CD4-positive, alpha-beta T cell (primary cell): ENCODE measurements at regions of chr5 and their contacts with region 1.

Region 1: GRCh38 chr5:79966448-79966847 is 24.6 kb downstream of the MTX3 start:
- DNase-seq: no peak
- ATAC-seq: no peak
- H3K4me3 ChIP-seq: no peak overlapping the region
- H3K4me3 Mint-ChIP-seq: no peak overlapping the region
- H3K27ac ChIP-seq: no peak overlapping the region
- H3K27ac Mint-ChIP-seq: no peak overlapping the region
- H3K4me1 ChIP-seq: no peaks in the 10 kb centered on the region
- H3K4me1 Mint-ChIP-seq: no peaks in the 10 kb centered on the region
- H3K27me3 ChIP-seq: peaks cover 4 to 6% of the 10 kb centered on the region in 2 experiments
- H3K27me3 Mint-ChIP-seq: peaks cover 14% of the 10 kb centered on the region
- CTCF ChIP-seq: no peak

Region 2: DNA sequence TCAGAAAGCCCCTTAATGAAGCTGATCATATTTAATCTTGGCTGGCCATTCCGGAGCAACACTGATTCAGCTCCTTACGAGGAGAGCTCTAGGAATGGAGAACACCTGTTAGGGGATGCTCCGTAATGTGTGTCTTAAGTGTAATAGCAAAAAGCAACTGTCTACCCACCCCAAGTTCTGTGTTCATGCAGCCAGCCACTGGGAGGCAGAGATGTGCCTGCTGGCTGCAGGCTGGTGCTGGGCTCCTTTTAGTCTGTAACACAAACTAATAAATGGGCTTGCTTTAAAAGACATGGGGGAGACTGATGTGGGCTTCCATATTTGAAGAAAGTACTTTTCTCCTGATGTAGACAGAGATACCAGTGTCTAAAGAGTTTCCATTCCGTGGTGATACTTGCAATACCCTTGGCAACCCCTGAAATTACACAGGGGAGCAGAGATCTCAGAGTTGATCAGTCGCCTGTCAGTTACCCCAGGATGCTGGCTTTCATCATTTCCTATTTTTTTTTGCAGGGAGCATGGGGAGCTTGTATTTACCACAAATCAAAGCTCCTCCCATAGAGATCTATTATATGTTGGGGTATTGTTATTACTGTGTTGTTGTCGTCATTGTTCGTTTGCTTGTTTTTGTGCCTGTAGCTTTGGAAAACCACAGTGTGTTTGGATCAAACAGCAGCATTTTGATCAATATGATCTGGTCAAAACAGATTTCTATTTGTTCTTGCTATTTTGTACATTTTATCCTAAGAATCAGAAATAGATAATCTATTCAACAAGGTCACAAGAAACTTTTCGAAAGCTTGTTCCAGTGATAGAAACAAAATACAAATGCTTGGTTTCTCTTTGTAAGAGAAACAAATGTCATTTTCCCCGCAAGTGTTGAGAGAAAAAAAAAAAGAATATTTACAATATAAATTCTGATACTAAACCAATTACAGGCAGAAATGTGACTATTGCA is 41.2 kb before region 1 on chr5:
- CTCF ChIA-PET with region 1: no interaction called
- POLR2A ChIA-PET with region 1: no interaction called
- intact Hi-C with region 1: no loop called
- DNase-seq: peak in 4 of 14 experiments; percentile 9 to 36 (median 21)
- ATAC-seq: no peak
- H3K4me3 ChIP-seq: no peak overlapping the region
- H3K4me3 Mint-ChIP-seq: no peak overlapping the region
- H3K27ac ChIP-seq: no peak overlapping the region
- H3K27ac Mint-ChIP-seq: no peak overlapping the region
- H3K4me1 ChIP-seq: no peaks in the 10 kb centered on the region
- H3K4me1 Mint-ChIP-seq: no peaks in the 10 kb centered on the region
- H3K27me3 ChIP-seq: no peaks in the 10 kb centered on the region
- H3K27me3 Mint-ChIP-seq: no peaks in the 10 kb centered on the region
- CTCF ChIP-seq: no peak

Region 3: GRCh38 chr5:79992891-79993657 is 26.6 kb after region 1 on chr5:
- CTCF ChIA-PET with region 1: no interaction called
- POLR2A ChIA-PET with region 1: no interaction called
- intact Hi-C with region 1: no loop called
- DNase-seq: no peak
- ATAC-seq: no peak
- H3K4me3 ChIP-seq: no peak overlapping the region
- H3K4me3 Mint-ChIP-seq: no peak overlapping the region
- H3K27ac ChIP-seq: no peak overlapping the region
- H3K27ac Mint-ChIP-seq: no peak overlapping the region
- H3K4me1 ChIP-seq: peaks cover 17% of the 10 kb centered on the region
- H3K4me1 Mint-ChIP-seq: peaks cover 18% of the 10 kb centered on the region
- H3K27me3 ChIP-seq: no peaks in the 10 kb centered on the region
- H3K27me3 Mint-ChIP-seq: peaks cover 12% of the 10 kb centered on the region
- CTCF ChIP-seq: no peak

Region 4: DNA sequence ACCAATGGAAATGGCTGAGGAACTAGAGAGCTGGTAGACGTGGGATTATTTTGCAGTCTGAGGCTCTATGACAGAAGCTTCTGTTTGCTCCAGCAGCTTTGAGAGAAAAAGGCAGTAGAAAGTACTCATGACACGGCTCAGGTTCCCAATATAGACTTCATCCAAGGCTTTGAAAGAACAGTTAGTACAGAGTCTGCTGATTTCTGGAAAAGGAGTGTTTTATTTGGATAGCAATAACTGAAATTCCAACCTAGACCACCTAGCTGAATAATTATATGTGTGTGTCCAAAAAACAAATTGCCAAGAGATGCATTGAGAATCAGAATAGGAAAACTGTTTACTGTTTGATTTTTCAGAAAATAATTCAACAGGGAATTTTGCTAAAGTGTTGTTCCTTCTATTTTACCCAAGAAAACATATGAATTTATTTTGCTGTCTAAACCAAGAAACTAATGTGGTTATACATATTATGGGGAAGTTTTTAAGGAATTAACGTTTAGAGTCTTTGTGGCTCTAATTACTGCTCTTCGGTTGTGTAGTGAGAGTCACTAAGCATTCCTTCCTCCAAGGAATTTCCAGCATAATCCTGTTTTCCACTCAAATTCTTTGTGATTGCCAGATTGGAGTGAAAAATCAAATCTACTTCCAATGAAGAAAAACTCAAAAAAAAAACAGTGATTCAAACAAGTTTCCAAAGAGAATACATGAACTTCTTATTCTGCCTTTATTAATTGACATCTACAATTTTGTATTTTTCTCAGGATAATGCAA is 42.7 kb after region 1 on chr5:
- CTCF ChIA-PET with region 1: no interaction called
- POLR2A ChIA-PET with region 1: no interaction called
- intact Hi-C with region 1: loop called in 1 of 2 experiments (anchors 5 kb)
- DNase-seq: no peak
- ATAC-seq: no peak
- H3K4me3 ChIP-seq: no peak overlapping the region
- H3K4me3 Mint-ChIP-seq: no peak overlapping the region
- H3K27ac ChIP-seq: no peak overlapping the region
- H3K27ac Mint-ChIP-seq: no peak overlapping the region
- H3K4me1 ChIP-seq: no peaks in the 10 kb centered on the region
- H3K4me1 Mint-ChIP-seq: no peaks in the 10 kb centered on the region
- H3K27me3 ChIP-seq: no peaks in the 10 kb centered on the region
- H3K27me3 Mint-ChIP-seq: no peaks in the 10 kb centered on the region
- CTCF ChIP-seq: no peak